CD4-positive, alpha-beta memory T cell (primary cell): ENCODE measurements at regions of chr19 and their contacts with region 1.

Region 1: DNA sequence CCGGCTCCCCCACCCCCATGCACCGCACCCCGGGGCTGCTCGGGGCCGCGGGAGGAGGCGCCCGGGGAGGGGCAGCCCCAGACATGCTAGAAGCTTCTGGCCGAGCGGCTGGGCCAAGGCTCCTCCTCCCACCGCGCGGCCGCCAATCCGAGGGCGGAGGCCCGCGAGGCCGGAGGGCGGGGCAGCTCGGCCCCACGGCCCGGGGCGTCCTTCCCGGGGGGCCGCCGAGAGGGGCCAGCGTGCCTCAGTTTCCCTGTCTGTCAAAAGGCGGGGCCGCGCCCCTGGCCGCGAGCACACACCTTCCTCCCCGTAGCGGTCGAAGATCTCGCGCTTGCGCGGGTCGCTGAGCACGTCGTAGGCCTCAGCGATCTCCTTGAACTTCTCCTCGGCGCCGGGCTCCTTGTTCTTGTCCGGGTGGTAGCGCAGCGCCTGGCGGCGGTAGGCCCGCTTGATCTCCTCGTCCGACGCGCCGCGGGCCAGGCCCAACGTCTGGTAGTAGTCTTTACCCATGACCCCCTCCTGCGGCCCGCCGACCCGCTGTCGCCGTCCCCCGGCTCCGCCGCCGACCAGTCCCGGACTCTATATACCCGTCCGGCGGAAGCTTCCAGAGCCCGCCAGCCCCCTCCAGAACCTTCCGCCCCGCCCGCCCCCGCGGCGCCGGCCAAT is at the start of gene DNAJB1:
- DNase-seq: peak in 3 of 5 donors; percentile 69 to 73 (median 73)
- H3K4me3 ChIP-seq: peak within 1 kb of the TSS; percentile 62 to 99
- H3K4me3 Mint-ChIP-seq: peak within 1 kb of the TSS; percentile 92 to 99 (median 96)
- H3K27ac ChIP-seq: peak within 1 kb of the TSS; percentile 94
- H3K27ac Mint-ChIP-seq: peak within 1 kb of the TSS; percentile 95 to 99 (median 99)
- H3K4me1 ChIP-seq: peaks cover 69% of the 10 kb centered on the region
- H3K4me1 Mint-ChIP-seq: peaks cover 46 to 81% (median 62%) of the 10 kb centered on the region in 4 donors
- H3K27me3 ChIP-seq: no peaks in the 10 kb centered on the region
- H3K27me3 Mint-ChIP-seq: no peaks in the 10 kb centered on the region
- total RNA-seq, gene DNAJB1: 122 to 138 TPM

Region 2: DNA sequence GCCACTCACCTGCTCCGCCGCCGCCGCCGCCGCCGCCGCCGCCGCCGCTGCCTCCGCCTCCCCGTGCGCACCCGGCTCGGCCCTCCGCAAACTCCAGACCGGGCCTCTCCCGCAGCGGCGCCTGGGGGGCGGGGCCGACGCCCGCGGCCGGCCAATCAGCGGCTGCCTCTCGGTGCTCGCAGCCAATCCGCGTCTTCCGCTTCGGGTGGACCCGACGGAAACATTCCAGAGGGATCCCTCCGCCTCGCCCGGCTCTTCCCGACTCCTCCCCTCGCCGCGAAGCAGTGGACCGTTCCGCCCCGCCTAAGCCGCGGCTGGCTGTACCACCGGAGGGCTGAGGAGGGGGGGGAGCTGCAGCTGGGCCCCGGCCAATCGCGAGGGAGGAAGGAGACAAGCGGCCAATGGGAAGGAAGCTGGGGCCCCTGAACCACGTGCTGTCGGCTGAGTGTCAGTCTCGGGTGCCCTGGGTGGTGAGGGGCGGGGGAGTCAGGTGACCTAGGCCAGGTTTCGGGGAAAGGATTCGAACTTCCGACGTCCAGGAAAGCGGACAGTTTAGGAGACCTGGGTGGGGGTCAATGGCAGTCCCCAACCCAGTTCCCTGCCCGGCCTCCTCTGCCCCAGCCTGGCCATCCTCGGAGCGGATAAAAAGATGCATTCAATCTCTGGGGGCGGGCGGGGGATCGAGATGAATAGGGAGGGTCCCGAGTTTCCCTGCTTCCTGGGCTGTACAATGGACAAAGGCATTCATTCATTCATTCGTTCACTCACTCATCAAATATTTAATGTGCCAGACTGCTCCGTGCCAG is 21.7 kb before region 1 on chr19 and contains the start of gene GIPC1:
- CTCF ChIA-PET with region 1: interaction called, 6 read pairs
- POLR2A ChIA-PET with region 1: interaction called, 1,220 read pairs
- intact Hi-C with region 1: no loop called
- DNase-seq: peak; percentile 83 to 90 (median 85)
- H3K4me3 ChIP-seq: peak within 1 kb of the TSS; percentile 42 to 56
- H3K4me3 Mint-ChIP-seq: peak within 1 kb of the TSS; percentile 84 to 92 (median 88)
- H3K27ac ChIP-seq: peak within 1 kb of the TSS; percentile 63
- H3K27ac Mint-ChIP-seq: peak within 1 kb of the TSS; percentile 84 to 96 (median 90)
- H3K4me1 ChIP-seq: peaks cover 27% of the 10 kb centered on the region
- H3K4me1 Mint-ChIP-seq: peaks cover 23 to 40% (median 29%) of the 10 kb centered on the region in 4 donors
- H3K27me3 ChIP-seq: no peaks in the 10 kb centered on the region
- H3K27me3 Mint-ChIP-seq: no peaks in the 10 kb centered on the region
- total RNA-seq, gene GIPC1: 32.3 to 33.8 TPM

Region 3: GRCh38 chr19:14529254-14530004 is 11.5 kb after region 1 on chr19 and contains the start of gene TECR:
- CTCF ChIA-PET with region 1: interaction called, 3 read pairs
- POLR2A ChIA-PET with region 1: interaction called, 1,220 read pairs
- intact Hi-C with region 1: loop called (anchors 1 kb)
- DNase-seq: peak; percentile 100
- H3K4me3 ChIP-seq: peak within 1 kb of the TSS; percentile 99 to 100
- H3K4me3 Mint-ChIP-seq: peak within 1 kb of the TSS; percentile 89 to 96 (median 94)
- H3K27ac ChIP-seq: peak within 1 kb of the TSS; percentile 88
- H3K27ac Mint-ChIP-seq: peak within 1 kb of the TSS; percentile 98 to 100 (median 99)
- H3K4me1 ChIP-seq: peaks cover 47% of the 10 kb centered on the region
- H3K4me1 Mint-ChIP-seq: peaks cover 17 to 65% (median 44%) of the 10 kb centered on the region in 4 donors
- H3K27me3 ChIP-seq: no peaks in the 10 kb centered on the region
- H3K27me3 Mint-ChIP-seq: no peaks in the 10 kb centered on the region
- total RNA-seq, gene TECR: 189 to 194 TPM

Region 4: DNA sequence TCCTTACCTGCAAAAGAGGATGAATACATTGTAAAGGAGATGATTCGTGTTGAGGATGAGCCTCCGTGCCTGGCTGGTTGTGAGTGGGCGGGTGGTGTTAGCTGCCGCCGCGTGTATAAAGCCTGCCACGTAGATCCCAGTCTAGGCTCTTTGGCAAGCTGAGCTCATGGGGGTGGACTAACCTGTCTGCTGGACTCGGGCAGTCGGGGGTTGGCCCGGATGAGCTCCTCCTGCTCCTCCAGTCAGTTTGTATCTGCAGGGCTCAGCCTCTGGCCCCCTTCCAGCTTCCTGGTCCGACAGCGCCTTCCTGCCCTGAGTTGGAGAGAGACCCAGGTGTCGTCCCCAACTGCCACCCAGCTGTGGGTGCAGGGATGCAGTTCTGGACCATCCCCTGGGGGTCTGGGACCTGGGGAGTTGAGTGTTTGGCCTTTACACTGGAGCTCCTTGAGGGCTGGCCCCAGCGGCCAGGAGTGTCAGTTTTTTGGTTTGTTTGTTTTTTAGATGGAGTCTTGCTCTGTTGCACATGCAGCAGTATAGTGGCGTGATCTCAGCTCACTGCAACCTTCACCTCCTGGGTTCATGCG is 32.3 kb after region 1 on chr19:
- CTCF ChIA-PET with region 1: interaction called, 3 read pairs
- POLR2A ChIA-PET with region 1: interaction called, 35 read pairs
- intact Hi-C with region 1: loop called (anchors 1 kb)
- DNase-seq: no peak
- H3K4me3 ChIP-seq: no peak overlapping the region
- H3K4me3 Mint-ChIP-seq: peak overlapping the region in 1 of 8 donors; percentile 36
- H3K27ac ChIP-seq: no peak overlapping the region
- H3K27ac Mint-ChIP-seq: peak overlapping the region in 4 of 7 donors; percentile 63 to 95 (median 73)
- H3K4me1 ChIP-seq: peaks cover 38% of the 10 kb centered on the region
- H3K4me1 Mint-ChIP-seq: peaks cover 19 to 64% (median 34%) of the 10 kb centered on the region in 4 donors
- H3K27me3 ChIP-seq: no peaks in the 10 kb centered on the region
- H3K27me3 Mint-ChIP-seq: no peaks in the 10 kb centered on the region

Region 5: DNA sequence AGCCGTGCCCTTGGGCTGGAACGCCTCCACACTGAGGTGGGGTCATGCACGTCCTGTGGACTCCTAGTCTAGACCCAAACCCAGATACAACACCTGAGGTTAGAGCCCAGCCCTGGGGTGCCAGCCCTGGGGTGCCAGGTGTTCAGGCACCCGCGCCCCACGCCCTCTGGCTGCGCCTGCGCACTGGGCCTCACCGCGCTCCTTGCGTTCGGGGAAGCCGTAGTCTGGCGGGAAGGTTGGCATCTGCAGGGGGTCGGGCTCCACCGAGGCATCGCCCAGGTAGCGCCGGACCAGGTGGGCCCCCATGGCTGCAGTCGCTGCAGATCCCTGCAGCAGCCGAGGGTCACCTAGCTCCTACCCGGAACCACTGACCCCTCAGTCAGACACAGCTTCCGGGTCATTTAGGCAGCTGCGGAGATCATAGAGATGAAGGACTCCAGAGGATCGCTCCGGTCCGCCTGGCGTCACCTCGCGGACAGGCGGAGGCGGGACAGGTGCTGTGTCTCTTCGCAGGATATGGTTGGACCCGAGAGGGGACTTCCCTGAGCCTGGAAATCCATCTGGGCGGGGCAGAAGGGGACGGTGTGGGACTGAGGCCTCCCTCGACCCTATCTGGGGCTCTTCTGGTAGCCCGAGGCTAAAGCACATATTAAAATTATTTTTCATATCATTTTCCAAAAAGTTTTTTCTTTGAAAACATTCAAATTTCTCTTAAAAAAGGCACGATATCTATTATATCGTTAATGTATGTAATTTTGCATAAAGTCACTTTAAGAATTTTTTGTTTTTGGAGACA is 53.9 kb after region 1 on chr19 and contains the start of gene NDUFB7:
- CTCF ChIA-PET with region 1: no interaction called
- POLR2A ChIA-PET with region 1: interaction called, 18 read pairs
- intact Hi-C with region 1: no loop called
- DNase-seq: peak; percentile 91 to 93 (median 93)
- H3K4me3 ChIP-seq: peak within 1 kb of the TSS; percentile 76 to 91
- H3K4me3 Mint-ChIP-seq: peak within 1 kb of the TSS; percentile 95 to 97 (median 96)
- H3K27ac ChIP-seq: peak within 1 kb of the TSS; percentile 68
- H3K27ac Mint-ChIP-seq: peak within 1 kb of the TSS; percentile 89 to 96 (median 93)
- H3K4me1 ChIP-seq: peaks cover 33% of the 10 kb centered on the region
- H3K4me1 Mint-ChIP-seq: peaks cover 16 to 55% (median 43%) of the 10 kb centered on the region in 4 donors
- H3K27me3 ChIP-seq: no peaks in the 10 kb centered on the region
- H3K27me3 Mint-ChIP-seq: no peaks in the 10 kb centered on the region
- total RNA-seq, gene NDUFB7: 56.6 to 67.2 TPM

Region 6: DNA sequence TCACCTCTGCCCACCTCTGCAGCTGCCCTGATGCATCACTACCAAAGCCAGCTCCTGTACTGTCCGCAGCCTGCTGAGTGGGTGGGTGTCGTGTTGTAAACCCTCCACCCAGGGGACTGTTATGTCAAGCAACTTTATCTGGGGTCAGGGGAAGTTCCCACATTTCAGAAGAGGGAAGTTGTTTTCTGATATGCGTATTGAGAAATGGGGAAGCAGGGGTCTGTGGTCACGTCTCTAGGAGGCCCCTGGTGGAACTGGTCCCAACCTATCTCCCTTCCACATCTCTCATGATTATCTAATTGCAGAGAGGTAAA is 96.1 kb after region 1 on chr19:
- CTCF ChIA-PET with region 1: no interaction called
- POLR2A ChIA-PET with region 1: no interaction called
- intact Hi-C with region 1: no loop called
- DNase-seq: no peak
- H3K4me3 ChIP-seq: no peak overlapping the region
- H3K4me3 Mint-ChIP-seq: no peak overlapping the region
- H3K27ac ChIP-seq: no peak overlapping the region
- H3K27ac Mint-ChIP-seq: peak overlapping the region in 1 of 7 donors; percentile 43
- H3K4me1 ChIP-seq: no peaks in the 10 kb centered on the region
- H3K4me1 Mint-ChIP-seq: no peaks in the 10 kb centered on the region
- H3K27me3 ChIP-seq: no peaks in the 10 kb centered on the region
- H3K27me3 Mint-ChIP-seq: peaks cover 2 to 6% of the 10 kb centered on the region in 2 donors

Region 7: DNA sequence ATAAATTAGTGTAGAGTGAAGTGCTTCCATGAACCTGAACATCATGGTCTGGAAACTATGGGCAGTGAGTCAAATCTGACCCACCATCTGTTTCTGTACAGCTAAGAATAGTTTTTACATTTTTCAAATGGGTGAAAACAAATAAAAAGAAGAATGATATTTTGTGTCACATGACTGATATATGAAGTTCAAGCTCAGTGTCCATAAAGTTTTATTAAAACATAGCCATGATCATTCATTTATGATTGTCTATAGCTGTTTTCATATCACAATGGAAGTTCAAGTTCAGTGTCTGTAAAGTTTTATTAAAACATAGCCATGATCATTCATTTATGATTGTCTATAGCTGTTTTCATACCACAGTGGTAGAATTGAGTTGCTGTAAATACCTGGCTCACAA is 214.5 kb after region 1 on chr19:
- CTCF ChIA-PET with region 1: no interaction called
- POLR2A ChIA-PET with region 1: no interaction called
- intact Hi-C with region 1: no loop called
- DNase-seq: no peak
- H3K4me3 ChIP-seq: no peak overlapping the region
- H3K4me3 Mint-ChIP-seq: no peak overlapping the region
- H3K27ac ChIP-seq: no peak overlapping the region
- H3K27ac Mint-ChIP-seq: no peak overlapping the region
- H3K4me1 ChIP-seq: no peaks in the 10 kb centered on the region
- H3K4me1 Mint-ChIP-seq: no peaks in the 10 kb centered on the region
- H3K27me3 ChIP-seq: no peaks in the 10 kb centered on the region
- H3K27me3 Mint-ChIP-seq: peaks cover 0 to 3% of the 10 kb centered on the region in 2 donors

Region 8: DNA sequence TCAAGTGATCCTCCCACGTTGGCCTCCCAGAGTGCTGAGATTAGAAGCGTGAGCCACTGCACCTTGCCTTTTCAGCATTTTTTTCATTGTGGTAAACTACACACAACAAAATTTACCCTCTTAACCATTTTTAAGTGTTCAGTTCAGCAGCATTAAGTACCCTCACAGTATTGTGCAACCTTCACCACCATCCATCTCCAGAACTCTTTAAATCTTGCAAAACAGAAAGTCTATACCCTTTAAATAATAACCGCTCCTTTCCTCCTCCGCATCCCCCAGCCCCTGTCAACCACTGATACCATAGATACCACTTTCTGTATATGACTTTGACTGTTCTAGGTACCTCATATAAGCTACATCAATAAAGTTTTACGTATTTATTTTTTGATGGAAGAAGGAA is 510.5 kb after region 1 on chr19:
- CTCF ChIA-PET with region 1: no interaction called
- POLR2A ChIA-PET with region 1: no interaction called
- intact Hi-C with region 1: no loop called
- DNase-seq: no peak
- H3K4me3 ChIP-seq: no peak overlapping the region
- H3K4me3 Mint-ChIP-seq: no peak overlapping the region
- H3K27ac ChIP-seq: no peak overlapping the region
- H3K27ac Mint-ChIP-seq: no peak overlapping the region
- H3K4me1 ChIP-seq: no peaks in the 10 kb centered on the region
- H3K4me1 Mint-ChIP-seq: no peaks in the 10 kb centered on the region
- H3K27me3 ChIP-seq: no peaks in the 10 kb centered on the region
- H3K27me3 Mint-ChIP-seq: peaks cover 6 to 12% of the 10 kb centered on the region in 2 donors